ENCODE measurements at regions of chr9 and their contacts with region 1.

Region 1: GRCh38 chr9:132125944-132126720 is 35.7 kb upstream of the NTNG2 start:
- DNase-seq: no peak
- H3K4me3 Mint-ChIP-seq: peak overlapping the region; percentile 65
- H3K27ac Mint-ChIP-seq: peak overlapping the region; percentile 50
- H3K4me1 Mint-ChIP-seq: peaks cover 15% of the 10 kb centered on the region
- H3K27me3 Mint-ChIP-seq: peaks cover 52% of the 10 kb centered on the region

Region 2: DNA sequence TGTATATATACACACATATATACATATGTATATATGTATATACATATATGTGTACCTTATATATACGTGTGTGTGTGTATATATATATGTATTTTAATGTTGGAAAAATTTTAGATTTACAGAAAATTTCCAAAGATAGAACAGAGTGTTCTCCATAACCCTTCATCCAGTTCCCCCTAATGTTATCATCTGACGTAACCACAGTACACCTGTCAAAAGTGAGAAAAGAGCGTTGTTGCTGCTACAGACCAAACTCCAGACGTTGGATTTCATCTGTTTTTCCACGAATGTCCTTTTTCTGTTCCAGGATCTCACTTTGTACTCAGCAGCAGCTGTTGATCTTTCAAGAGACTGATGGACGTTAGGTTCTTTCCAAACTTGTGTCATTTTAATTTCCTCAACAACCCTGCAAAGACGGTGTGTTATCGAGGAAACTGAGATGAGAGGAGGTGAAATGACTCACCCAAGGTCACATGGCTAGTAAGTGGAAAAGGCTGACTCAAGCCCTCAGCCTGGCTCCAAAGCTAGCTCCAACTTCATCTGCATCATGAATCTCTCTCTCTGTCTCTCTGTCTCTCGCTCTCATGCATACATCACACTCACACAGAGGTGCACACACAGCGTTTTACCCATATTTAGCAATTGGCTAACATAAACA is 18.7 kb after region 1 on chr9:
- intact Hi-C with region 1: loop called (anchors 1 kb)
- DNase-seq: peak; percentile 70
- H3K4me3 Mint-ChIP-seq: no peak overlapping the region
- H3K27ac Mint-ChIP-seq: peak overlapping the region; percentile 79
- H3K4me1 Mint-ChIP-seq: peaks cover 19% of the 10 kb centered on the region
- H3K27me3 Mint-ChIP-seq: peaks cover 46% of the 10 kb centered on the region

Region 3: GRCh38 chr9:132160802-132161742 is 34.9 kb after region 1 on chr9:
- intact Hi-C with region 1: loop called (anchors 5 kb)
- DNase-seq: peak; percentile 90
- H3K4me3 Mint-ChIP-seq: peak overlapping the region; percentile 88
- H3K27ac Mint-ChIP-seq: peak overlapping the region; percentile 77
- H3K4me1 Mint-ChIP-seq: peaks cover 10% of the 10 kb centered on the region
- H3K27me3 Mint-ChIP-seq: peaks cover 60% of the 10 kb centered on the region

Measured in activated CD4-positive, alpha-beta T cell treated with anti-CD3 and anti-CD28 coated beads, Interleukin-2, amount 10 ng/mL, durations not matched to agents 24 days and 14 days (primary cell).